ENCODE measurements at regions of chr14 and their contacts with region 1.

Region 1: GRCh38 chr14:98456231-98456630 is 815.8 kb downstream of the BCL11B start:
- DNase-seq: no peak
- ATAC-seq: no peak
- H3K4me3 Mint-ChIP-seq: no peak overlapping the region
- H3K27ac Mint-ChIP-seq: no peak overlapping the region
- H3K4me1 Mint-ChIP-seq: peaks cover 7% of the 10 kb centered on the region
- H3K27me3 Mint-ChIP-seq: no peaks in the 10 kb centered on the region

Region 2: GRCh38 chr14:97796511-97796910 is 659.7 kb before region 1 on chr14:
- CTCF ChIA-PET with region 1: no interaction called
- POLR2A ChIA-PET with region 1: no interaction called
- intact Hi-C with region 1: no loop called
- DNase-seq: no peak
- ATAC-seq: peak; percentile 53
- H3K4me3 Mint-ChIP-seq: no peak overlapping the region
- H3K27ac Mint-ChIP-seq: no peak overlapping the region
- H3K4me1 Mint-ChIP-seq: peaks cover 15% of the 10 kb centered on the region
- H3K27me3 Mint-ChIP-seq: no peaks in the 10 kb centered on the region

Region 3: GRCh38 chr14:98415766-98416165 is 40.5 kb before region 1 on chr14:
- CTCF ChIA-PET with region 1: no interaction called
- POLR2A ChIA-PET with region 1: no interaction called
- intact Hi-C with region 1: loop called in 1 of 2 experiments (anchors 1 kb)
- DNase-seq: no peak
- ATAC-seq: no peak
- H3K4me3 Mint-ChIP-seq: no peak overlapping the region
- H3K27ac Mint-ChIP-seq: no peak overlapping the region
- H3K4me1 Mint-ChIP-seq: peaks cover 2% of the 10 kb centered on the region
- H3K27me3 Mint-ChIP-seq: no peaks in the 10 kb centered on the region